ENCODE measurements at regions of chr22 and their contacts with region 1.

Region 1: DNA sequence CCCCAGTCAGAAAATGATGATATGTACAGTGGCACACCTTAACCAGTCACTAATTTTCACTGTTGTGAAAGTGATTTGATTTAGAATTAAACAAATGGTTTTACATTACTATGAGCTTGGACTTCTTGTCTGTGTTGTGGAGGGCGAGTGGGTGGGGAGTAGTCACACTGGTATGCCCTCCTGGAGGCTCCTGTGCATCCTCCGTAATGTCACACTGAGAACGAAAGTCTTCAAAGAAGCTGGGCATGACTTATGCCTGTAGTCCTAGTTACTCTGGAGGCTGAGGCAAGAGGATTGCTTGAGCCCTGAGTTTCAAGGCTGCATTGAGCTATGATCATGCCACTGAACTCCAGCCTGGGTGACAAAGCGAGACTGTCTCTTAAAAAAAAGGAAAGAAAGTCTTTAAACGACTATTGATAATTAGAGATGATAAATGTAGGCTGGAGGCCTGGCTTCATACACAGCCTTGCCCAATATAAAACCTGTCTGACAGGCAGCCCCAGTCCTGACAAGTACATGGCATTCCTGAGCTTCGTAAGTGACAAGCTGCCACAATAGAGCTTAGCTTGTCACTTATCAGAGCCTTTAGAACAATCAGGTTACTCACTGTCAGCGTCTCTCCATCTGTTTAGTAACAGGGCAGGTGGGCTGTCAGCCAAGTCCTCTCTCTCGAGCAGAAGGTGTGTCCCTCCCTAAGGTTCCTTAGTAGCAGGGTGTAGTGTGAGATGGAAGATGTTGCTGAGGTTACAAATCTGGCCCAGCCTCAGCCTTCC is 5.0 kb upstream of the LIMK2 start:
- DNase-seq: peak; percentile 63 to 79
- ATAC-seq: peak; percentile 9 to 68 (median 36)
- H3K4me3 ChIP-seq: no peak overlapping the region
- H3K27ac ChIP-seq: peak overlapping the region; percentile 58
- H3K4me1 ChIP-seq: peaks cover 22% of the 10 kb centered on the region
- H3K27me3 ChIP-seq: no peaks in the 10 kb centered on the region
- CTCF ChIP-seq: no peak

Region 2: GRCh38 chr22:31160328-31160978 is 46.6 kb before region 1 on chr22:
- intact Hi-C with region 1: loop called (anchors 5 kb)
- DNase-seq: no peak
- ATAC-seq: peak; percentile 43 to 66 (median 56)
- H3K4me3 ChIP-seq: peak overlapping the region; percentile 91
- H3K27ac ChIP-seq: peak overlapping the region; percentile 95
- H3K4me1 ChIP-seq: peaks cover 26% of the 10 kb centered on the region
- H3K27me3 ChIP-seq: no peaks in the 10 kb centered on the region
- CTCF ChIP-seq: no peak

Region 3: GRCh38 chr22:31248138-31248745 is 41.1 kb after region 1 on chr22:
- intact Hi-C with region 1: no loop called
- DNase-seq: peak; percentile 77 to 82
- ATAC-seq: peak; percentile 76 to 84 (median 80)
- H3K4me3 ChIP-seq: peak overlapping the region; percentile 74
- H3K27ac ChIP-seq: peak overlapping the region; percentile 76
- H3K4me1 ChIP-seq: peaks cover 43% of the 10 kb centered on the region
- H3K27me3 ChIP-seq: no peaks in the 10 kb centered on the region
- CTCF ChIP-seq: no peak

Measured in psoas muscle (tissue), 8 donors.